Activated CD4-positive, alpha-beta memory T cell treated with anti-CD3 and anti-CD28 coated beads, Interleukin-2, amount 10 ng/mL, durations not matched to agents 7 days and 5 days (primary cell): ENCODE measurements at regions of chr15 and their contacts with region 1.

Region 1: DNA sequence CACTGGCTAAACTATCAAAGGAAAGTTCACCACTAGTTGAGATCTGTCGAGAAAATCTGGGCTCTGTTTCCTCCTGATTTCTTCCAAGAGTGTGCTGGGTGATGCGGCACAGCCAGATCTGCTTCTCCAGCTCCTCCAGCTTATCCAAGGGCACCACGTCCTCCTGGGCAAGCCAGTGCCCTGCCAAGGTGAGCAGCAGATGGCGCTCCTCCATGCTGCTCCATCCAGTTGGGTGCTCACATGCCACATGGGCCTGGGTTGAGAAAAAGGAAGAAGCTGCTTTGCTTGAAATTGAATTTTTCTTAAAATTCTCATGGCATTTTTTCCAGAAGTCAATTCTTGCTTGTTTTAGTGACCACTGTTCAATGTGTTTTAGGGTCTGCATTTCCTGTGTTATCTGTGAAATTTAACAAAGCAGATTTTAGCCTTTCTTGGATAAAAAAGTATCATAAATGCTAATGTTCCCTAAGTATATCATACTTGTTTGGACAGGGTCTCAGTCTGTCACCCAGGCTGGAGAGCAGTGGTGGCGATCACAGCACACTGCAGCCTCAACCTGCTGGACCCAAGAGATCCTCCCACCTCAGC is 47.3 kb downstream of the EIF3J start:
- DNase-seq: peak; percentile 70
- H3K4me3 Mint-ChIP-seq: no peak overlapping the region
- H3K27ac Mint-ChIP-seq: no peak overlapping the region
- H3K4me1 Mint-ChIP-seq: peaks cover 14% of the 10 kb centered on the region
- H3K27me3 Mint-ChIP-seq: no peaks in the 10 kb centered on the region

Region 2: DNA sequence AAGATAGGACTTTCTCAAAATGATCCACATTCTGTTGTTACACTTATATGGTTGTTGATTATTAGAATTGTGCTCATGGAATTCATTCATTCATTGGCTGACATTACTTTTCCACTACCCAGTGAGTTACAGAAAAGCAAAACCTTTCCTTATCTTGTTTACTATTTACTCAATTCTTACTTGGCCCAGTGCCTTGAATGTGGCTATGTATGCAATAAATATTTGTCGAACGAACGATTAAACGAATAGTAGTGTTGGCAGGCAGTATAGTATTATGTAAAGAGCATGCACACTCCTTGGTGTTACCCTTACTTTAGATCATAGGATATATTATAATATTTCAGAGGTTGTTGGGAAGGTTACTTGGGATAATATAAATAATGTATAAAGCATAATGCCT is 125.8 kb before region 1 on chr15:
- CTCF ChIA-PET with region 1: no interaction called
- POLR2A ChIA-PET with region 1: no interaction called
- DNase-seq: no peak
- H3K4me3 Mint-ChIP-seq: no peak overlapping the region
- H3K27ac Mint-ChIP-seq: no peak overlapping the region
- H3K4me1 Mint-ChIP-seq: peaks cover 8% of the 10 kb centered on the region
- H3K27me3 Mint-ChIP-seq: no peaks in the 10 kb centered on the region

Region 3: GRCh38 chr15:44545913-44546802 is 38.1 kb before region 1 on chr15:
- CTCF ChIA-PET with region 1: interaction called, 20 read pairs
- POLR2A ChIA-PET with region 1: interaction called, 7 read pairs
- DNase-seq: peak; percentile 64
- H3K4me3 Mint-ChIP-seq: peak overlapping the region; percentile 72
- H3K27ac Mint-ChIP-seq: peak overlapping the region; percentile 97
- H3K4me1 Mint-ChIP-seq: peaks cover 55% of the 10 kb centered on the region
- H3K27me3 Mint-ChIP-seq: no peaks in the 10 kb centered on the region

Region 4: GRCh38 chr15:44573386-44573785 is 10.9 kb before region 1 on chr15:
- CTCF ChIA-PET with region 1: interaction called, 10 read pairs
- POLR2A ChIA-PET with region 1: interaction called, 3 read pairs
- DNase-seq: no peak
- H3K4me3 Mint-ChIP-seq: no peak overlapping the region
- H3K27ac Mint-ChIP-seq: no peak overlapping the region
- H3K4me1 Mint-ChIP-seq: peaks cover 15% of the 10 kb centered on the region
- H3K27me3 Mint-ChIP-seq: no peaks in the 10 kb centered on the region

Region 5: DNA sequence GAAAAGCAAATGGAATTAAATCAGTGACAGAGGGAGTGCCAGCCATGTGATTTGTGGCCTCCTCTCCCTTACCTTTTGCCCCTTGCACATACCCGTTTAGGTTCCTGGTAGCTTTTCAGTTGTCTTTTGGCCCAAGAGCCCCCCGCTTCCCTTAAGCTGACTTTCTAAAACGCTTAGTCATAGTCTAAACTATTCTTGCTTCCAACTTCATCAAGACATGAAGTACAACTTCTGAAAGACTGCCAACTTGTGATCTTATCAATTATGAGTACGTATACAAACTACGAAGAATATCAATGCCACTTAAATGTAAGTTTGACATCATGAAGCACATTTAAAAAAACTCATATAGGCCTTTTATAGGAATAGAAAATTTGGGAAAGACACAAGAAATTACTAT is 14.6 kb after region 1 on chr15:
- CTCF ChIA-PET with region 1: interaction called, 8 read pairs
- POLR2A ChIA-PET with region 1: interaction called, 12 read pairs
- DNase-seq: no peak
- H3K4me3 Mint-ChIP-seq: no peak overlapping the region
- H3K27ac Mint-ChIP-seq: peak overlapping the region; percentile 77
- H3K4me1 Mint-ChIP-seq: peaks cover 38% of the 10 kb centered on the region
- H3K27me3 Mint-ChIP-seq: no peaks in the 10 kb centered on the region

Region 6: GRCh38 chr15:44728576-44729407 is 144.5 kb after region 1 on chr15:
- CTCF ChIA-PET with region 1: interaction called, 6 read pairs
- POLR2A ChIA-PET with region 1: interaction called, 11 read pairs
- DNase-seq: peak; percentile 97
- H3K4me3 Mint-ChIP-seq: peak overlapping the region; percentile 99
- H3K27ac Mint-ChIP-seq: peak overlapping the region; percentile 100
- H3K4me1 Mint-ChIP-seq: peaks cover 69% of the 10 kb centered on the region
- H3K27me3 Mint-ChIP-seq: no peaks in the 10 kb centered on the region